ENCODE measurements at regions of chr12 and their contacts with region 1.

Region 1: GRCh38 chr12:107027636-107028053 is 40.7 kb upstream of the MTERF2 start:
- DNase-seq: no peak
- ATAC-seq: peak; percentile 94
- H3K4me3 Mint-ChIP-seq: no peak overlapping the region
- H3K27ac Mint-ChIP-seq: peak overlapping the region; percentile 76
- H3K4me1 Mint-ChIP-seq: peaks cover 41% of the 10 kb centered on the region
- H3K27me3 Mint-ChIP-seq: no peaks in the 10 kb centered on the region

Region 2: DNA sequence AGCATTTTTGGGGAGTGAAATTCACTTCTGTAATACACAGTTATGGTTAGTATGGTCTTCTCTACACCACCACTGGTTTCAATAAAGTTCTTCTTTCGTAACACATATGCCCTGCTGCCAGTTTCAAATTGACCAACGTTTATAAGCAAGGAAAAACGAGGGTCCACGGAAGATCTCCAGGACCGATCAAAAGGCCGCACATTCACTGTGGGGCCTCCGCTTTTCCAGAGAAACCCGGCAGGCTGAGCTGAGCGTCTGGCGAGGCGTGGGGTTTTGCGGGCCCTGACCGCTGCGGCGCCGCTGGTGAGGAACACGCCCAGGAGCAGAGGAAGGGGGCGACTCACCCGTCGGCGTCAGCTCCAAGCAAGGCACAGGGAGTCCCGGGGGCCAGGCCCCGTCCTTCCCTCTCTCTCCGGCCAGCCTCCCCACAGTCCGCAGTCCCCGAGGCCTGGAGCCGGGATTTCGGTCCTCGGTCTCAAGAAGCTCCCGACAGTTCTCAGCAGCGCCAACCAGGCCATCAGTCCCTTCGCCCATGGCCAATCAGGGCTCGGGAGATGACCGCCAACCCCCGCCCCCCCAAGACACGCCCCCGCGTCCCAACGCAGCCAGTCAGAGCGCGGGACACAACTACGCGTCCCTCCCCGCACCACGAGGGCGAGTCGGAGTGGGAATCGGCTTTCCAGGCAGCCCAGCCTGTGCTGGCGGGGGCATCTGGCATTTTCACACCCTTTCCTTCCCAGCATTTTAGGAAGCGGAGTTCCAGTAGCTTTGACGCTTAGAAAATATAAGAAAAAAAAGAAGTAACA is 40.8 kb before region 1 on chr12 and contains the start of gene MTERF2:
- CTCF ChIA-PET with region 1: no interaction called
- POLR2A ChIA-PET with region 1: no interaction called
- intact Hi-C with region 1: loop called in 1 of 2 experiments (anchors 2 kb)
- DNase-seq: peak; percentile 88
- ATAC-seq: peak; percentile 93
- H3K4me3 Mint-ChIP-seq: peak within 1 kb of the TSS; percentile 85
- H3K27ac Mint-ChIP-seq: peak within 1 kb of the TSS; percentile 75
- H3K4me1 Mint-ChIP-seq: peaks cover 42% of the 10 kb centered on the region
- H3K27me3 Mint-ChIP-seq: no peaks in the 10 kb centered on the region
- total RNA-seq, gene MTERF2: 5.0 to 5.8 TPM

Region 3: GRCh38 chr12:107277855-107278254 is 250.2 kb after region 1 on chr12:
- CTCF ChIA-PET with region 1: no interaction called
- POLR2A ChIA-PET with region 1: no interaction called
- intact Hi-C with region 1: no loop called
- DNase-seq: no peak
- ATAC-seq: no peak
- H3K4me3 Mint-ChIP-seq: no peak overlapping the region
- H3K27ac Mint-ChIP-seq: no peak overlapping the region
- H3K4me1 Mint-ChIP-seq: peaks cover 2% of the 10 kb centered on the region
- H3K27me3 Mint-ChIP-seq: peaks cover 4% of the 10 kb centered on the region